ENCODE measurements at regions of chr11 and their contacts with region 1.

Region 1: GRCh38 chr11:9384535-9385303 is at the start of gene IPO7:
- DNase-seq: peak; percentile 84 to 89 (median 86)
- H3K4me3 ChIP-seq: peak within 1 kb of the TSS; percentile 92 to 97
- H3K4me3 Mint-ChIP-seq: peak within 1 kb of the TSS; percentile 92 to 98 (median 94)
- H3K27ac ChIP-seq: peak within 1 kb of the TSS; percentile 86
- H3K27ac Mint-ChIP-seq: peak within 1 kb of the TSS; percentile 92 to 96 (median 94)
- H3K4me1 ChIP-seq: peaks cover 29% of the 10 kb centered on the region
- H3K4me1 Mint-ChIP-seq: peaks cover 23 to 43% (median 34%) of the 10 kb centered on the region in 4 donors
- H3K27me3 ChIP-seq: no peaks in the 10 kb centered on the region
- H3K27me3 Mint-ChIP-seq: no peaks in the 10 kb centered on the region
- total RNA-seq, gene IPO7: 63.4 to 67.0 TPM

Region 2: GRCh38 chr11:9160166-9160565 is 224.6 kb before region 1 on chr11:
- CTCF ChIA-PET with region 1: interaction called, 3 read pairs
- POLR2A ChIA-PET with region 1: no interaction called
- intact Hi-C with region 1: loop called (anchors 10 kb)
- DNase-seq: no peak
- H3K4me3 ChIP-seq: no peak overlapping the region
- H3K4me3 Mint-ChIP-seq: no peak overlapping the region
- H3K27ac ChIP-seq: no peak overlapping the region
- H3K27ac Mint-ChIP-seq: peak overlapping the region in 3 of 7 donors; percentile 5 to 85 (median 30)
- H3K4me1 ChIP-seq: no peaks in the 10 kb centered on the region
- H3K4me1 Mint-ChIP-seq: peaks cover 1 to 13% (median 9%) of the 10 kb centered on the region in 4 donors
- H3K27me3 ChIP-seq: no peaks in the 10 kb centered on the region
- H3K27me3 Mint-ChIP-seq: no peaks in the 10 kb centered on the region

Region 3: DNA sequence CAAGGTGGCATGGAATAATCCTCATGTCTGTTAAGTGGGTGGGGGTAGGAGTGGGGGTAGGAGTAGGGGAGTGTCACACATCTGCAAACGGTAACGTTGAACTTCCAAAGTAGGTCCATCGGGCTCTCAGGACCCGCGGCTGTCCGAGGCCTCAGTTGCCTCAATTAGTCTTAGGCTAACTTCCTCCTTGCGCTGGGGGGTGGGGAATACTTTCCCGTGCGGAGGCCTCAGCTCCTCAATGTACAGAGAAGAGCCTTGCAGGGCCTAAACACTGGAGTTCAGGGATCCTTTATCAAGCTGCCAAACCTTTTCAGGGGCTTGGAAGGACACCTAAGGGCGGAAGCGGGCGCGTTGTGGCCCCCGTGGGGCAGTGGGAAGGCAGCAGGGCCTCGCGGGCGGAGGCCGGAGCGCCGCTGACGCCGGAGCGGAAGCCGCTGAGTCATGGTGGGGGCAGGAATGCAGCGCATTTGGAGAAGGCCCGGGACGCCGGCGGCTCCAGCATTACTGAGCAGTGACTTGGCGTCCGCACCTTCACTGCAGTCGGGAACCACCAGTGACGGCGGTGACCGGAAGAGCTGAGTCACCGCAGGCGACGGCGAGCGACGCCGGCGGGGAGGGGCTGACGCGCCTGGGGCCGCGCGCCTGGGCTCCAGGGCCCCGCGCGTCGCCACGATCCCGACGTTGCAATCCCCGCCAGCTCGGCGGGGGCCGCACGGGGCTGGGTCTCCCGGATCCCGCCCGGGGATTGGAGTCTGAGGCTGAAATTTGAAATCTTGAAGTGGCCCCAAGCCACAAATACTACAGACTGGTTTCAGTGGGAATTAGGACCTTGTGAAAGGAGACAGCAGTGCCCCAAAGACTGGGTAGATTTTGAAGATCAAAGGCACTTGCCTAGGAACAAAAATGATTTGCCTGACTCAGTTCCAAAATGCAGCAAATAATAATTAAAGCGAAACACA is 20.5 kb before region 1 on chr11:
- CTCF ChIA-PET with region 1: interaction called, 5 read pairs
- POLR2A ChIA-PET with region 1: interaction called, 29 read pairs
- intact Hi-C with region 1: loop called (anchors 1 kb)
- DNase-seq: peak; percentile 66 to 85 (median 78)
- H3K4me3 ChIP-seq: peak overlapping the region; percentile 62 to 96
- H3K4me3 Mint-ChIP-seq: peak overlapping the region; percentile 82 to 89 (median 88)
- H3K27ac ChIP-seq: peak overlapping the region; percentile 84
- H3K27ac Mint-ChIP-seq: peak overlapping the region; percentile 89 to 97 (median 92)
- H3K4me1 ChIP-seq: peaks cover 10% of the 10 kb centered on the region
- H3K4me1 Mint-ChIP-seq: peaks cover 11 to 13% (median 12%) of the 10 kb centered on the region in 4 donors
- H3K27me3 ChIP-seq: no peaks in the 10 kb centered on the region
- H3K27me3 Mint-ChIP-seq: no peaks in the 10 kb centered on the region

Measured in CD4-positive, alpha-beta memory T cell (primary cell).